Activated CD8-positive, alpha-beta memory T cell treated with anti-CD3 and anti-CD28 coated beads, Interleukin-2, amount 10 ng/mL, durations not matched to agents 7 days and 5 days (primary cell): ENCODE measurements at regions of chr12 and their contacts with region 1.

Region 1: DNA sequence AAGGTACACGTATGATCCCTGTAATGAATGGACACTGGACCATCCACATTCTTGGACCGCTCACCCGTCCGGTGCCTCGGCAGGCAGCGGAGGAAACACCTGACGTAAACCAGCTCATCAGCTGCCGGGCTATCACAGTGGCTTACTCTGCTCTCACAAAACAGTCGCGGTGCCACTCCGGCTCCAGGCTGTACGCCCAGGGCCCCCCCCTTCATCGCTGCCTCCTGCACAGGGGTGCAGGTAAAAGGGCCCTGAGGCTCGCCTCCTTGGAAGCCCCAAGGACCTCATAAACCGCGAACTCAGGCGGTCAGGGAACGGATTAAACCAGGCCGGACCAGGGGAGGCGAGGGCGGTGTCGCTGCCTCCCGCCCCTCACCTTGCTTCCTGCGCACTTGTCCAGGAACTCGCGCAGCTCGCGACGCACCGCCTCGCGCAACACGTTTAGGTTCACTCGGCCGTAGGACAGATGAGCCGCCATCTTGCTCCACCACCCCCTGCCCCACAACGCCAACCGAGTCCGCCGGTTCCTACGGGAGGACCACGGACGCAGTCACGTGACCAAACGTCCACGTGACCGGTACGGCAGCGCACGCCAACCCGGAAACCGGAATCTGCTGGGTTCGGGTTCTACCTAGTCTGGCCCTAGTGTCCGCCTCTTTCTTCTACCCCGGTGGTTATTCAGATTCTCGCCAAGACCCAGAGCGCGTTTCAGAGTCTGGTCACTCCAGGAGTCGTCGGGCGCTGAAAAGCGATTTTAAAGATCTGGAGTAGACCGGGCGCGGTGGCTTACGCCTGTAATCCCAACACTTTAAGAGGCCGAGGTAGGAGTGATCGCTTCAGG is at the start of gene VPS33A:
- DNase-seq: peak; percentile 97
- ATAC-seq: peak; percentile 90
- H3K4me3 Mint-ChIP-seq: peak within 1 kb of the TSS; percentile 96
- H3K27ac Mint-ChIP-seq: peak within 1 kb of the TSS; percentile 99
- H3K4me1 Mint-ChIP-seq: peaks cover 25% of the 10 kb centered on the region
- H3K27me3 Mint-ChIP-seq: peaks cover 4% of the 10 kb centered on the region
- total RNA-seq, gene VPS33A: 26.2 to 37.3 TPM

Region 2: DNA sequence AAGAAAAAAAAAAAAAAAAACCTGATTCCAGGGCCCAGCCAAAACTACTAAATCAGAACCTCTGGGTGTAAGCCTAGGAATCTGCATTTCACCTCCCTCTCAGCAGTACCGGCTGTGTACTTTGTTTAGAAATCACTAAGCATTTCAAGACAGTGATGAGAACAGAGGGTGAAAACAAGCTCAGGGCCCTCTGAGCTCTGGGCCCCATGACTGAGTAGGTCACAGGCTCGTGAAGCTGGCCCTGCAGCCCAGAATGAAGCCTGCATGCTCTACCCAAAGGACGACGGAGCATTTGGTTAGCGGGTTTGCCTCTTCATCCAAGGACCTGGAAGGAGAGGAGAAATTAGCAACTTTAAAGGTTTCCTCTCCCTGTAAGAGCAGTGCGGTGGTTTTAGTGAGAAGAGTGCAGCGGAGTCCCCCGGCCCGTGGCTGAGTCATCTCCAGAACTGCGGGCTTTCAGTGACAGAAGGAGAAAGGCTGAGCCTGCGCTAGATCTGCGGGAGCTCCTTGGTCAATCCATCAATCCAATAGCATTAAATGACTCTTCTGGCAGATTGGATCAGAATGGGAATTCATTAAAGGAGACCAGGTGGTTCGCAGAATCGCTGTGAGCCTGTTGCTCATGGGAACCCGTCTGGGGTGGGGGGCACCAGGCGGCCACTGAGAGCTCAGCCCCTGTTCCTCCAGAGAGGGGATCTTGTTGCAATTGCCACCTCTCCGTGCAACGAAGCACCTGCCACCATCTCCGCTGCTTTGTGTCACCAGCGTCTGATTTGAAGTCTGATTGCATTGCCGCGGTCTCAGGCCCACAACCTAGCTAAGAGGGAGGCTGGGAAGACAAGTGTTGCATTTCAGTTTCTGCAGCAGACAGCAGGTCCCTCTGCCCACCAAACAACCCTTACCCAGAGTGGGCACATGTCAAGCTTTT is 99.5 kb before region 1 on chr12:
- CTCF ChIA-PET with region 1: interaction called, 10 read pairs
- DNase-seq: peak; percentile 91
- ATAC-seq: peak; percentile 93
- H3K4me3 Mint-ChIP-seq: peak overlapping the region; percentile 38
- H3K27ac Mint-ChIP-seq: peak overlapping the region; percentile 79
- H3K4me1 Mint-ChIP-seq: peaks cover 41% of the 10 kb centered on the region
- H3K27me3 Mint-ChIP-seq: peaks cover 30% of the 10 kb centered on the region

Region 3: DNA sequence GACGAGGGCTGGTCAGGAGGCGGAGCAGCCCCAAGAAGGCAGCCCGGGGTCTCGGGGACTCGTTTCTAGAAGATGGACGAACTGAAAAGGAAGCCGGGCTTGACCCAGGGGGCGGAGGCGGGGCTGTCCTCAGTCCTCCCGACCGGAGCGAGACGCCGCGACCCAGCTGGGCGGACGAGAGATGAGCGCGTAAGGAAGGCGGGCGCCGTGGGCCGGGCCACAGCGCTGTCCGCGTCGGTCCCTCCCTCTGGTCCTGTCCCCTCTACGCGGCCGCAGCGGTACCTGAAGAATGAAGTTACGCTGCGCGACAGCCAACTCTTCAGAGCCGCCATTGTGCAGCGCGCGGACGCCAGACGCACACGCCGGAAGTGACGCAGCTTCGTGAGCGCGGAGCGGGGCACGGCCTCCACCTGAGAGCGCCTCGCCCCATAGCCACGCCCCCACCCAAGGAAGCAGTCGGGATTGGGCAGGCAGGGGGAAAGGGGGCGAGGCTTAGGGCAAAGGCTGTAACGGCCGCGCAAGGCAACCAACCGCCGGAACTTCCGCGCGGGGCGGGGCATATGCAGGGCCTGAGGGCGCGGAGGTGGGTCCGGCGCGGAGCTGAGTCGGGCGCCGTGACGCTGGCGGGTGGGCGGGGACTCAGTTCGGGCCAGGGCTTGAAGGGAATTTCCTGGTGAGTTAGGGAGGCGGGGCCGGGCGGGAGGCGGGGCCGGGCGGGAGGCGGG is 40.3 kb before region 1 on chr12 and contains the start of gene DIABLO:
- CTCF ChIA-PET with region 1: interaction called, 34 read pairs
- DNase-seq: peak; percentile 100
- ATAC-seq: peak; percentile 91
- H3K4me3 Mint-ChIP-seq: peak within 1 kb of the TSS; percentile 85
- H3K27ac Mint-ChIP-seq: peak within 1 kb of the TSS; percentile 91
- H3K4me1 Mint-ChIP-seq: peaks cover 45% of the 10 kb centered on the region
- H3K27me3 Mint-ChIP-seq: no peaks in the 10 kb centered on the region
- total RNA-seq, gene DIABLO: 40.3 to 46.1 TPM

Region 4: GRCh38 chr12:122244565-122245371 is 21.4 kb before region 1 on chr12:
- CTCF ChIA-PET with region 1: interaction called, 18 read pairs
- DNase-seq: peak; percentile 63
- ATAC-seq: peak; percentile 83
- H3K4me3 Mint-ChIP-seq: peak overlapping the region; percentile 84
- H3K27ac Mint-ChIP-seq: peak overlapping the region; percentile 97
- H3K4me1 Mint-ChIP-seq: peaks cover 37% of the 10 kb centered on the region
- H3K27me3 Mint-ChIP-seq: no peaks in the 10 kb centered on the region

Region 5: DNA sequence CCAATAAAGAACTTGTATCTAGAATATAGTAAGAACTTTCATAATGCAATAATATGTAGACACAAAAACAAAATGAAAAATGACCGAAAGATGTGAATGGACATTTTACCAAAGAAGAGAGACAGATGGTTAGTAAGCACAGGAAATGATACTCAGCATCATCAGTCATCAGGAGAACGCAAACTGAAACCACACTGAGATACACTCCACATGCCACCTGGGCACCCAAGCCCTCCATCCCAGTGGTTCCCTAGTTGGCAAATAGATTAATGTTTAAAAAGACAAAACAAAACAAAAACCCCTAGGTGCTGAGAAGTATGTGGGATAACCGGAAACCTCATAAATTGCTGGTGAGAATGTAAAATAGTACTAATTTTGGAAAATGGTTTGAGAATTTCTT is 26.9 kb after region 1 on chr12:
- CTCF ChIA-PET with region 1: no interaction called
- DNase-seq: no peak
- ATAC-seq: peak; percentile 42
- H3K4me3 Mint-ChIP-seq: no peak overlapping the region
- H3K27ac Mint-ChIP-seq: peak overlapping the region; percentile 63
- H3K4me1 Mint-ChIP-seq: peaks cover 12% of the 10 kb centered on the region
- H3K27me3 Mint-ChIP-seq: no peaks in the 10 kb centered on the region

Region 6: DNA sequence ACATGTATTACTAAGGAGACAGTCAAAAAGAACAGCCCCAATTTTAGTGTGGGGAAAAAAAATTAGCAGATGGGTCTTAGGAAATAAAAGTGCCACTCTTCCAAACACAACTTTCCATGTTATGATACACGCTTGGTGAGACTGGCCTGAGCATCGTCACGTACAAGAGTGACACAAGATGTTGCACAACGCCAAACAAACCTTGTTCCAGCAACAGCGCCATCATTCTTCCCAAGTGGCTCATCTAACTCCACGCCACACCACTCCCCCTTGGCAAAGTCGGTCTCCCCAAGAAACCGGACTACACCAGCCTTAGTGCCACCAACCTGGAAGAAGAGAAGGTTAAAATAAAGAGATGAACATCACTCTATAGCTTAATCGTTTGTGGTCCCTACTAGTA is 97.6 kb after region 1 on chr12:
- CTCF ChIA-PET with region 1: no interaction called
- DNase-seq: no peak
- ATAC-seq: no peak
- H3K4me3 Mint-ChIP-seq: no peak overlapping the region
- H3K27ac Mint-ChIP-seq: no peak overlapping the region
- H3K4me1 Mint-ChIP-seq: peaks cover 14% of the 10 kb centered on the region
- H3K27me3 Mint-ChIP-seq: no peaks in the 10 kb centered on the region